Mammary epithelial cell (primary cell): ENCODE measurements at regions of chr6 and their contacts with region 1.

Region 1: DNA sequence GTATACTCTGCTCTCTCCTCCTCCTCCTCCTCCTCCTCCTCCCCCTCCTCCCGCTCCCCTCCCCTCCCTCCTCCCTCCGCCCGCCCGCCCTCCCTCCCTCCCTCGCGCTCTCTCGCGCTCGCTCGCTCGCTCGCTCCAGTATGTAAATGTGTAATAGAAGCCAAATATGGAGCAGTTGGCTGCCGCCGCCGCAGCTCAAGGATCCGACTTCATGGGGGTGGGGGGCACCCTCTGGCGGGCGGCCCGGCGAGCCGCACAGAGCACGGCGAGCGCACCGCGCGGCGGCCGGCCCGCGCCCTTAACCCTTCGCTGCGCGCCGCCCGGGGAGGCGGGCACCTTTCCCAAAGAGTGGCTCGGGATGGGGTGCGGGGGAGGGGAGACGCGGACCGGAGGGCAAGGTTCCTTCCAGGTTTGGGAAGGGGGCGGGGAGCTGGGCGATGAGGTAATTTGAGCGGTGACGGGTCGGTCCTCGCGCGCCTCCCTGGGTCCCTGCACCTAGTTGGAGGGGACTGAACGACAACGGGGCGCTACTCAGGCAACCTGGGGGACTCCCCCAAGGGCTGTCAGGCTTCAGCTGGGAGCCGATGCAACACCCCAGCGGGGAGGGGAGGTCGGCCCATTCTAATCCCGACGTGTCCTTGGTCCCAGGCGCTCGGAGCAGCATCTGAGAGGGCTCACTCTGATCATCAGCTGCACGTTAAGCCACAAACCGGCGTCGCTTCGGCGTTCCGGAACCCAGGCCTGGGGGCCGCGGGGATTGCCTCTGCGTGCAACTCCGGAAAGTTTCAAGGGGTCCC is 409 bp upstream of the ATXN1 start:
- DNase-seq: peak; percentile 80
- H3K4me3 ChIP-seq: peak overlapping the region; percentile 54 to 80 (median 74)
- H3K27ac ChIP-seq: peak overlapping the region; percentile 83
- H3K4me1 ChIP-seq: peaks cover 35% of the 10 kb centered on the region
- H3K27me3 ChIP-seq: no peaks in the 10 kb centered on the region
- CTCF ChIP-seq: peak in 1 of 2 donors; percentile 35

Region 2: GRCh38 chr6:16409531-16410441 is 351.9 kb before region 1 on chr6:
- CTCF ChIA-PET with region 1: interaction called, 10 read pairs
- dilution Hi-C with region 1: no loop called
- in situ Hi-C with region 1: no loop called
- intact Hi-C with region 1: loop called (anchors 2 kb)
- DNase-seq: peak; percentile 62
- H3K4me3 ChIP-seq: no peak overlapping the region
- H3K27ac ChIP-seq: no peak overlapping the region
- H3K4me1 ChIP-seq: no peaks in the 10 kb centered on the region
- H3K27me3 ChIP-seq: no peaks in the 10 kb centered on the region
- CTCF ChIP-seq: peak; percentile 67

Region 3: DNA sequence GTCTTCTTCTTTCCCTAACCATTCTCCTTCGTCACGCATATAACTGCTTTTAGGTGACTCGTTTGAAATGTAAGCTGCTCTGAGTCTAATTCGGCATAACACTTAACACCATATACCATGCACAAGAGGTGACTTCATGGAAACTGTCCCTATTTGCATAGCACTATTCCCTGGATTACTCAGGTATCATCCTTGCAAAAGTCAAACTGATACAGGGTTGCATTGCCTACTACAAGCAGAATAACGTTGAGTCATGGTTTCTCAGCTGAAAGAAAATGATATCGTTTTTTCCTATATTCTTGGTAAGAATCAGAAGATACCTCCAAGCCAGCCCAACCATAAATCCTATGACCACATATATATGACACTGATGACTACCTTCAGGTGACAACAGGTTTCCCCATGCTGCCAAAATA is 227.9 kb before region 1 on chr6:
- CTCF ChIA-PET with region 1: no interaction called
- dilution Hi-C with region 1: no loop called
- in situ Hi-C with region 1: no loop called
- intact Hi-C with region 1: no loop called
- DNase-seq: no peak
- H3K4me3 ChIP-seq: no peak overlapping the region
- H3K27ac ChIP-seq: no peak overlapping the region
- H3K4me1 ChIP-seq: no peaks in the 10 kb centered on the region
- H3K27me3 ChIP-seq: no peaks in the 10 kb centered on the region
- CTCF ChIP-seq: no peak

Region 4: DNA sequence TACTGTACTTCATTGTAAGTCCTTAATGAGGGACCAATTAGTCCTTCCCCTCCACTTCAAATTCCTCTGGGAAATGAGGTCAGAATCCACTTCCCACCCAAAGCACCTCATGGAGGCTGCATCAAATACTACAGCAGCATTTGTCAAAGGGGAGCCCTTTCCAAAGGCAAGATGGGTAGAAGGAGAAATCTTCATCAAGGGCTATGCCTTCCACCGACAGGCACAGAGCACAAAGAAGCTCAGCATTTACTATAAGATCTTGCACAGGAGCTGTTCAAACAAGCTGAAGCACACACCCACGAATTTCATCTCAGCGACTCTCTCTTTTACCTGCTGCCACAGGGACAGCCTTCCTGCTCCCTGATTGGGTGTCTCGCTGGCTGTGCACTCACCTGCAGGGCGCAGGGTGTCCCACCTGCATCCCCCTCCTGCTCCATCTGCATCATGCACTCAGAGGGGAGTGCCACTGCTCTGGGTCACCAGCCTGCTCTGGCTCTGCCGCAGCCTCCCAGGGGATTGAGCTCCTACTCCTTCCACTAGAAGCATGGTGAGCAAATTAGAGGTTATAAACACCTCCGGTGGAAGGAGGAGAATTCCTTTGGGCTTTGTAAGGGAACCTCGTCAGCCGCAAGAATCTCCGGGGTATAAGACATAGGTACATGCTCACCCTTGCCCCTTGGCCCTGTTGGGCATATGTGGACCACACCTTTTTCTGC is 164.9 kb before region 1 on chr6:
- CTCF ChIA-PET with region 1: no interaction called
- dilution Hi-C with region 1: no loop called
- in situ Hi-C with region 1: no loop called
- intact Hi-C with region 1: loop called (anchors 2 kb)
- DNase-seq: peak; percentile 82
- H3K4me3 ChIP-seq: peak overlapping the region in 2 of 3 experiments; percentile 12 to 41
- H3K27ac ChIP-seq: peak overlapping the region; percentile 59
- H3K4me1 ChIP-seq: peaks cover 38% of the 10 kb centered on the region
- H3K27me3 ChIP-seq: no peaks in the 10 kb centered on the region
- CTCF ChIP-seq: no peak

Region 5: DNA sequence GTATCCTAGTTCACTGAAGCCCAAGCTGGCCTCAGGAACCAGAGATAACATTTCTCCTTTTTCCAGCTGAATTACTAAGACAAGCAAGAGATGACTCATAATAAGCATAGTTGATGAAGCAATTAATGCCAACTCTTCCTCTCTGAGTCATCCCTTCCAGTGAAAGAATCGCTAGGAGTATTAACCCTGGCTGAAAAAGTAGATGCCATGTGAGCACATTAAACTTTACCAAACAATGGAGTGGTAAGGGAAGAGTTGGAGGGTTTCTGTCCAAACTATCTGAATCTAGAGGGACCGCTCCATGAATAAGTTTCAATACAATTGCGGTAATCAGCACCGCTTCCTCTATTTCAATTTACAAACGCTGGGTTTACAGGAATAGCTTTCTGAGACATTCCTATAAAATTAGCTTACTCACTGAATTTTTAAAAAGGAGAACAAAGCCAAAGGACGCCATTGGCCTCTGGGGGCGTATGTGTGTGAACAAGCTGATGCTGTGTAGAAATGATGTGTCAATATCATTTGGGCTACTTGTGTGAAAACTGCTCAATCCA is 48.7 kb before region 1 on chr6:
- CTCF ChIA-PET with region 1: interaction called, 5 read pairs
- dilution Hi-C with region 1: no loop called
- in situ Hi-C with region 1: no loop called
- intact Hi-C with region 1: loop called (anchors 1 kb)
- DNase-seq: peak; percentile 92
- H3K4me3 ChIP-seq: peak overlapping the region; percentile 21 to 41 (median 30)
- H3K27ac ChIP-seq: peak overlapping the region; percentile 97
- H3K4me1 ChIP-seq: peaks cover 30% of the 10 kb centered on the region
- H3K27me3 ChIP-seq: no peaks in the 10 kb centered on the region
- CTCF ChIP-seq: peak; percentile 37 to 48

Region 6: DNA sequence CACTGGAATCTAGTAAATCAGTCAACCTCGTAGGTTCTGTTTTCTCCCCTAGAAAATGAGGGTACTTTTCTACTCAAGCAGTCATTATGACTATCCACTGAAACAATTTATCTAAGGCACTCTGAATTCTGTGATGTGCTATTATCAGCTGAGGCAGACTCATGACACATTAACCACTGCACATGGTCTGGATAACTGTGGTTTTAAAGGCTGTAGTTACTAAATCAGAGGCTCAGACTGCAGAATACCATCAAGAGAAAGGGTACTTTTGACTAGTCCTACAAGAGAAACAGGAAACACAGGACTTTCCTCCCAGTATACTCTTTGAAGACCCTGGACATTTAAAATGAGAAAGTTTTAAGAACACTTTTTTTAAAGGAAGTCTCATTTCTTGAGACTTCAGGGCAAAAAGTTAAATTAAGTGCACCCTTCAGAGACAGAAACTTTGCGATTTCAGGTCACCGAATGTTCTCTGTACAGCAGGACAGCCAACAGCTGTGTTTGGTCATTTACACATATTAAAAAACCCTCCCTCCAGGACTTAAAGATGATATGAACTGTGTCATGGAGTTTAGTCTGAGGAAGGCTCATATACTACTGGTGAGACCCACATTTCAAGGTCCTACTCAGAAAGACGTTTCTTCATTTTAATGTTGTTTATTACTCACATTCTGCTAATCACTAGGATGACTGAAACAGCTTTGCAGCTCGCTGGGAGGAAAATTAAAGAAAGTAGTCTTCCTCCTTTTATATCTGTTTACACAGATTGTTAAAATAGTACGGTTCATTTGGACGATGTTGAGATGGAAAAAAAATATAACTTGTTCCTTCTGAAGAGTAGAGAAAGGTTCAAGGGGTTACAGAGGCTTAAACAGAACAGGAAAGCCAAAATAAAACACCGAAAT is 20.3 kb before region 1 on chr6:
- CTCF ChIA-PET with region 1: interaction called, 10 read pairs
- dilution Hi-C with region 1: no loop called
- in situ Hi-C with region 1: no loop called
- intact Hi-C with region 1: loop called (anchors 1 kb)
- DNase-seq: peak; percentile 94
- H3K4me3 ChIP-seq: no peak overlapping the region
- H3K27ac ChIP-seq: peak overlapping the region; percentile 55
- H3K4me1 ChIP-seq: peaks cover 53% of the 10 kb centered on the region
- H3K27me3 ChIP-seq: no peaks in the 10 kb centered on the region
- CTCF ChIP-seq: no peak

Region 7: DNA sequence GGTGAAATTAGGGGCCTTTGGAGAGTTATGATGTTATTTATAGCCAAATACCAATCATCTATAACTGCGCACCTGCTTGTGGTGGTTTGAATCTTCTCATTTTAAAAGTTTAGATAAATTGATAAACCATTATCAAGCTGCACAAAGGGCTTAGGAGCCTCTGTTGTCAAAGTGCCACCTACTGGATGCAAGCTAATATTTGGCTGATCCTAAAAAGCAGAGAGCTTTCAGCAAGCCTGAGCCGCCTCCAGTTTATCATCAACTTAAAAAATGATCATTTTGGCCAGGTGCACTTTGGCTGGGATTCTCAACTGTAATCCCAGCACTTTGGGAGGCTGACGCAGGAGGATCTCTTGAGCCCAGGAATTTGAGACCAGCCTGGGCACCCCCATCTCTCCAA is 58.1 kb after region 1 on chr6:
- CTCF ChIA-PET with region 1: interaction called, 3 read pairs
- dilution Hi-C with region 1: no loop called
- in situ Hi-C with region 1: no loop called
- intact Hi-C with region 1: loop called (anchors 1 kb)
- DNase-seq: no peak
- H3K4me3 ChIP-seq: no peak overlapping the region
- H3K27ac ChIP-seq: no peak overlapping the region
- H3K4me1 ChIP-seq: peaks cover 8% of the 10 kb centered on the region
- H3K27me3 ChIP-seq: no peaks in the 10 kb centered on the region
- CTCF ChIP-seq: peak; percentile 18 to 53

Region 8: DNA sequence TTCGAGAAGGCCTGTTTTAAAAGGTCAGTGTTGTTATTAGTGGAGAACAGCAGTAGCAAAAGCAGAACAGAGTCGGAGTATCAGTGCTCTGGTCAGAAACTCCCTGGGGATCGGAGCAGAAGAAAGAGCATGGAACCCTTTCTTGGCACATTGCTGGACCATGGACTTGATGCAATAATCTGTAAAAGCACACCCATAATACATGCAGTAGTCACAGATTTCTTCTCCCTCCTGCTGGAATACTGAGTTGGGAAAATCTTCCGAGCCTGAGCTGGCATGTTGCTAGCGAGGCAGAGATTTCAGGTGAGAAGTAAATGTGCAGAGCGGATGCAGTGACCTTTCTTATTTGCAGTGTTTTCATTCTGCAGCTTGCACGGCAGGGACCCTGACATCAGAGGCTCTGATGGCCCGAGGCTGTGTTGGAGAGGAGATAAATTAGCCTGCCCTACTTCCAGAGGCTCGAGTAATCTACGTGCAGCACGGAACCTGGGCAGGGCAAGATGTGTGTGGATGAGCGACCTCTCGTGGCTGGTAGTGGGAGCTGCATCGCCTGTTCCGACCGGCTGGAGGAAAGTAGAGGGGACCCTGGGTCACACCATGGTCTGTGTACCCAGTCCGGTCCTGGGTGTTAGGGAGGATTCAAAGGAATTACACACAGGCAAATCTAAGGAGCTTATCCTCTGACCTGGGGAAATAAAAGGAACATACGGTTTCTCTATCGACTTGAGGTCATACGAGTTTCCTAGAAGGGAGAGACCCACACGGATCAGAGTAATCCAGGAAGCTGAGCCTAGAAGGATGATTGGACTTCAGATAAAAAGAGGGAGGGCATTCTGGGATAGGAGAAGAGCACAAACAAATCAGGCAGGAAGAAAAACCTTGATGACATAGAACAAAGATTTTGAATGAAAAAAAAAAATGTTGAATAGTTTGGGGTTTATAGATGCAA is 203.2 kb after region 1 on chr6:
- CTCF ChIA-PET with region 1: no interaction called
- dilution Hi-C with region 1: no loop called
- in situ Hi-C with region 1: loop called in 1 of 2 experiments (anchors 10 kb)
- intact Hi-C with region 1: loop called (anchors 1 kb)
- DNase-seq: peak; percentile 45
- H3K4me3 ChIP-seq: no peak overlapping the region
- H3K27ac ChIP-seq: no peak overlapping the region
- H3K4me1 ChIP-seq: no peaks in the 10 kb centered on the region
- H3K27me3 ChIP-seq: peaks cover 2% of the 10 kb centered on the region
- CTCF ChIP-seq: peak; percentile 96 to 97